ENCODE measurements at regions of chr17 and their contacts with region 1.

Region 1: DNA sequence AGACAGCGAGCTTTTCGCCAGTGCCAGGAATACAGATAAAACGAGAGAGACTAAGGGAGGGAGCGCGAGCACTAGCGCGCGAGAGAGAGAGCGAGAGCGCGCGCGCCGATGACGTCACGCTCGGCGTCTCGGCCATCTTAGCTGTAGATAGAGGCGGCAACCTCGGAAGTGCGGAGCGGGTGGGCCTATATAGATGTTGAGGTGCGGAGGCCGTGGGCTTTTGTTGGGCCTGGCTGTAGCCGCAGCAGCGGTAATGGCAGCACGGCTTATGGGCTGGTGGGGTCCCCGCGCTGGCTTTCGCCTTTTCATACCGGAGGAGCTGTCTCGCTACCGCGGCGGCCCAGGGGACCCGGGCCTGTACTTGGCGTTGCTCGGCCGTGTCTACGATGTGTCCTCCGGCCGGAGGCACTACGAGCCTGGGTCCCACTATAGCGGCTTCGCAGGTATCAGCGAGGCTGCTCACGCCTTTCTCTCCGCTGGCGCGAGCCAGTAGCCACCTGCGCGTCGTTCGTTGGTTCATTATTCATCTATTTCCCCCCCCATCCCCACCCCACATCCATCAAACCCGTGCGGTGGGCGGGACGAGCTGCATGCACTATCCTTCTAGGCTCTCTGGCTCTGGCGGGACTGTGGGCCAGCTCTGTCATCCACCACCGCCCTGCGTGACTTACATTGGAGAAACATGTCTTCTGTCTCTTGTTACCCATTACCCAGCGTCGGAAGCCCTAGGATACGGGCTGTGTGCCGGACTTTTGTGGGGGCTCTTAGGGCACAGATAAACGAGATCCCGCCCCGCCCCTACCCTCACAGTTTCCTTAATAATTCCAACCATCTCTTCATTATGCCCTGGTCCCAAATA is 795 bp downstream of the CYB5D2 start:
- DNase-seq: peak; percentile 95
- ATAC-seq: peak; percentile 82
- H3K4me3 Mint-ChIP-seq: peak overlapping the region; percentile 97
- H3K27ac Mint-ChIP-seq: peak overlapping the region; percentile 99
- H3K4me1 Mint-ChIP-seq: peaks cover 40% of the 10 kb centered on the region
- H3K27me3 Mint-ChIP-seq: no peaks in the 10 kb centered on the region

Region 2: DNA sequence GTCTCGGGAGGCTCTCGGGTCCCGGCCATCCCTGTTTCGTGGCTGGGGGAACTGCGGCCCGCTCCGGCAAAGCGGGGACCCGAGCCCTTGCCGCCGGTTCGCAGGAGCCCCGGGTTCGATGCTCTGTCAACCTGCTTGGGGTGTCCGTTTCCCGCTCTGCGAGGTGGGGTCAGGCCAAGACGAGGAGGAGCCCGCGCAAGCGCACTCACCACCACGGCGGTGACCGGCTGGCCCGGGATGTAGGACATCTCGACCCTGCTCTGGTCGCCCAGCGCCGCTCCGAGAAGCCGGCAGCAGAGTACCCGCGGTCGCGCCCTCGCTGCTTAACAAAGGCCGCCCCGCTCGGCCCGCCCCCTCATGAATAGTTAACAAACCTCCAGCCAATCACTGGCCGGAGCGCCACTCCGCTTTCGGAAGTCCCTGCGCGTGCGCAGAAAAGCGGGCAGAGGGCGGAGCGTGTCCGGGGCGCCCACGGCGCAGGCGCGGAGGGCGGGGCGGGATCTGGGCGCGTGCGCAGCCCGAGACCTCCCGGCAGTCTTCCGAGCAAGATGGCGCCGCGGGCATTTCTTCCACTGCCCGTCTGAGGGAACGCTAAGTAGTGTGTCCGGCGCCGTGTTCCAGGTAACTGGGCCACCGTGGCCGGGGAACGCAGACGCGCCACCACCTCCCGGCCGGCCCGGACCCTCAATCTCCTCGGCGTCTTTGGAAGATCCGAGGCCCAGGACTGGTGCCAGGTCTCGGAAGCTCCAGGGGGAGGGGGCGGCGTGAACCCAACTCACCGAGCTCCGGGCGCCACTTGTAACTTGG is 475.3 kb before region 1 on chr17 and contains the starts of genes EMC6 and TAX1BP3:
- CTCF ChIA-PET with region 1: no interaction called
- POLR2A ChIA-PET with region 1: no interaction called
- intact Hi-C with region 1: loop called in 1 of 2 experiments (anchors 1 kb)
- DNase-seq: peak; percentile 99
- ATAC-seq: peak; percentile 94
- H3K4me3 Mint-ChIP-seq: peak within 1 kb of the TSS; percentile 97
- H3K27ac Mint-ChIP-seq: peak within 1 kb of the TSS; percentile 94
- H3K4me1 Mint-ChIP-seq: peaks cover 21% of the 10 kb centered on the region
- H3K27me3 Mint-ChIP-seq: no peaks in the 10 kb centered on the region
- total RNA-seq, gene EMC6: 43.6 to 44.3 TPM
- total RNA-seq, gene TAX1BP3: 12.0 to 14.6 TPM

Region 3: DNA sequence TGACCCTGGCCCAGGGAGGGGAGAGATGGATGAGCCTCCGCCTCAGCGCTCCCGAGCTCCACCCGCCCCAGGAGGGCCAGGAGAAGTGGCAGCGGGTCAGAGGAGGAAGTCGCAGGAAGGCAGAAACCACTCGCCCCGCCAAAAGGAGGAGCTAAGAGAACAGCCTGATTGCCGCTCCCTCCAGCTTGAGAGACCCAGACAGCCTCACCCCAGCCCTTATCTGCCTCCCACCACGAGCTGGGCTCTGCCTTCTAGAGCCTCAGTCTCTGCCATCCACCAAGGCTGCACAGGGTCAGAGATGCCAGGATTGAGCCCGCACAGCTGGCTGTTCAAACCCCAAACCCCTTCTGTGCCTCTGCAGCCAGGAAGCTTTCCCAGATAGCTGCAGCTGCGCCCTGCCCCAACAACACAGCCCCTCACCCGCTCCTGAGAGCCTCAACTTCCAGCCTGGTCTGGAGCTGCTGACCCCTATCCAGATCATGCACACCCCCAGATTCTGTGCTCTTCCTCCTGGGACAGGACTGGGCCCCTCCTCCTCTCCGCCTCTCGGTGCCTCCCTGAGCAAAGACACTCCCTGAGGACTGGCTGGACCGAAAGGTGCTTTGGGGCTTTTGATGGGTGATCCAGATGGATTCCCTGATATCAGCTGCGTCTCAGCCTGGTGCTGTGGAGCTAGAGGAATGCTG is 178.5 kb before region 1 on chr17:
- CTCF ChIA-PET with region 1: no interaction called
- POLR2A ChIA-PET with region 1: interaction called, 3 read pairs
- intact Hi-C with region 1: loop called (anchors 1 to 10 kb)
- DNase-seq: peak; percentile 86
- ATAC-seq: peak; percentile 75
- H3K4me3 Mint-ChIP-seq: peak overlapping the region; percentile 81
- H3K27ac Mint-ChIP-seq: peak overlapping the region; percentile 93
- H3K4me1 Mint-ChIP-seq: peaks cover 40% of the 10 kb centered on the region
- H3K27me3 Mint-ChIP-seq: no peaks in the 10 kb centered on the region

Region 4: DNA sequence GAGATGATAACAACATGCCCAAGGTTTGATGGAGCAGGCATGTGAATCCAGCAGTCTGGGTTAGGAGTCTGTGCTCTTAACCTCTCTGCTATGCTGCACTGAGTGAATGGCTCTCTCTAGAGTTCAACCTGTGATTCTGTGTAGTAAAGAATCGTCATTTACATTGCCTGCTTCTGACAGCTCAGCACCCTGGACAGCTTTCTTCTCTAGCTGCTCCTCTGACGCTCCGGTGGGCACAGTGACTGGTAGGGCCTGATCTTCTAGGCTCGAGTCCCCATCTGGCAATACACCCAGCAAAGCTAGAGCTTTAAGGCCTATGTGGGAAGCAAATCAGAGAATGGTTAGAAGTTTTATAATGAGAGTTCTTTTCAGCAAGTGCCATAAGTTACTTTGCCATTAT is 94.2 kb before region 1 on chr17:
- CTCF ChIA-PET with region 1: no interaction called
- POLR2A ChIA-PET with region 1: no interaction called
- intact Hi-C with region 1: no loop called
- DNase-seq: no peak
- ATAC-seq: no peak
- H3K4me3 Mint-ChIP-seq: no peak overlapping the region
- H3K27ac Mint-ChIP-seq: no peak overlapping the region
- H3K4me1 Mint-ChIP-seq: peaks cover 19% of the 10 kb centered on the region
- H3K27me3 Mint-ChIP-seq: no peaks in the 10 kb centered on the region

Region 5: DNA sequence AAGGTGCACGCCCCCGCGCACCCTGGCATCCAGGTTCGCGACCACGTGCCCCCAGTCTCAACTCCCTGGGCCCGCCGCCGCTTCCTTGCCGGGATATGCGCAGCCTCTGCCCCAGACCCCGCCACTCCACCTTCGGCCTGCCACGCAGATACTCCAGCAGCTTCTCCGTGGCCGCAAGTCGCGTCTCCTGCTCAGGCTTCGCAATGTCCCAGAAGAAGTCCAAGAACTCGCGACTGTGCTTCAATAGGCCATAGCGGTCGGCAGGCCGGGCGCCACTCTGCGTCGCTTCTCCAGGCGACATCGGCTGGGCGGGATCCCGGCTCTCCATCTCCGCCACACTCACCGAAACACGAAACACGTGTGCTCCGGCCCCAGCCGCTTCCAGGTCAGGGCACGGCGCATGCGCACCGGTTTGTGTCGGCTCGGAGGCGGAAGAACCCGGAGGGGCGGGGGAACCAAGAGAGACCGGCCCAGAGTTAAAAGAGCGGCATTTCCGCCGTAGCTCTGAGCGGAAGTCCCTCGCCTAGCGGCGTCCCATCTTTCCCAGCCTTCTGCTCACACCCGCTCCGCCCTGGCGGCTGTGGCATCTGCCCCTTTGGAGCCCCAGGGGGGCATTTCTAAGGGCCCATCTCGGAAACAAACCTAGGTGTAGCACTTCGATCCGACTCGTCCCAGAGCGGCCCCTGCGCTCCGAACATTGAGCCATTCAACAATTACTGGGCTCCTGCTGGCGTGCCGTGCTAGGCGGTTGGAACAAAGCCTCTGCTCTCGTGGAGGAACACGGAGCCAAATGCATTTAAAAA is 411.4 kb after region 1 on chr17 and contains the start of gene MYBBP1A:
- CTCF ChIA-PET with region 1: no interaction called
- POLR2A ChIA-PET with region 1: no interaction called
- intact Hi-C with region 1: loop called in 1 of 2 experiments (anchors 1 kb)
- DNase-seq: peak; percentile 99
- ATAC-seq: peak; percentile 97
- H3K4me3 Mint-ChIP-seq: peak within 1 kb of the TSS; percentile 93
- H3K27ac Mint-ChIP-seq: peak within 1 kb of the TSS; percentile 96
- H3K4me1 Mint-ChIP-seq: peaks cover 21% of the 10 kb centered on the region
- H3K27me3 Mint-ChIP-seq: no peaks in the 10 kb centered on the region
- total RNA-seq, gene MYBBP1A: 97.7 to 144 TPM

Region 6: GRCh38 chr17:4635823-4636375 is 492.1 kb after region 1 on chr17:
- CTCF ChIA-PET with region 1: no interaction called
- POLR2A ChIA-PET with region 1: no interaction called
- intact Hi-C with region 1: no loop called
- DNase-seq: peak; percentile 19
- ATAC-seq: peak; percentile 27
- H3K4me3 Mint-ChIP-seq: no peak overlapping the region
- H3K27ac Mint-ChIP-seq: no peak overlapping the region
- H3K4me1 Mint-ChIP-seq: peaks cover 19% of the 10 kb centered on the region
- H3K27me3 Mint-ChIP-seq: peaks cover 46% of the 10 kb centered on the region

Region 7: GRCh38 chr17:4796553-4796921 is 652.7 kb after region 1 on chr17:
- CTCF ChIA-PET with region 1: no interaction called
- POLR2A ChIA-PET with region 1: no interaction called
- intact Hi-C with region 1: loop called in 1 of 2 experiments (anchors 1 kb)
- DNase-seq: peak; percentile 58
- ATAC-seq: no peak
- H3K4me3 Mint-ChIP-seq: peak overlapping the region; percentile 94
- H3K27ac Mint-ChIP-seq: peak overlapping the region; percentile 97
- H3K4me1 Mint-ChIP-seq: peaks cover 24% of the 10 kb centered on the region
- H3K27me3 Mint-ChIP-seq: peaks cover 3% of the 10 kb centered on the region

Measured in activated CD4-positive, alpha-beta T cell treated with anti-CD3 and anti-CD28 coated beads for 36 hours (primary cell).